PC-3 (cell line): ENCODE measurements at regions of chr2 and their contacts with region 1.

Region 1: DNA sequence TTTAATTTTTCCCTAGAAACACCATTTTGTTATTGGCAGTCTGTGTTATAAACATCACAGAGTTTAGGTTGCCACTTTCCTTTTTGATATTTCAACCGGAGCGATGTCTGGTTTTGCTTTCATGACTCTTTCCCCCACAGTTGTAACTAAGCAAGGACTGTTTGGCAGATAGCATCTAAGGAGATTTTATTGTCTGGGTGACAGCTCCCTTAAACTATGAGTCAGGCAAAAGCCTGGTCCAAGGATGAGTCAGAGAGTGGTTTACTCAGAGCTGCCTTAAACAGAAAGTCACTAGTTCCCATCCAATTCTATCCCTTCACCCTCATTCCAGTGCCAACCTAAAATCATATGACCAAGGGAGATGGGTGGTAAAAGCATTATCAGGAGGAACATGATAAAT is 341.6 kb upstream of the VWC2L start:
- DNase-seq: peak; percentile 97
- ATAC-seq: peak; percentile 93
- H3K4me3 ChIP-seq: peak overlapping the region; percentile 53
- H3K27ac ChIP-seq: peak overlapping the region; percentile 88
- H3K4me1 ChIP-seq: peaks cover 49% of the 10 kb centered on the region
- H3K27me3 ChIP-seq: no peaks in the 10 kb centered on the region
- CTCF ChIP-seq: no peak

Region 2: DNA sequence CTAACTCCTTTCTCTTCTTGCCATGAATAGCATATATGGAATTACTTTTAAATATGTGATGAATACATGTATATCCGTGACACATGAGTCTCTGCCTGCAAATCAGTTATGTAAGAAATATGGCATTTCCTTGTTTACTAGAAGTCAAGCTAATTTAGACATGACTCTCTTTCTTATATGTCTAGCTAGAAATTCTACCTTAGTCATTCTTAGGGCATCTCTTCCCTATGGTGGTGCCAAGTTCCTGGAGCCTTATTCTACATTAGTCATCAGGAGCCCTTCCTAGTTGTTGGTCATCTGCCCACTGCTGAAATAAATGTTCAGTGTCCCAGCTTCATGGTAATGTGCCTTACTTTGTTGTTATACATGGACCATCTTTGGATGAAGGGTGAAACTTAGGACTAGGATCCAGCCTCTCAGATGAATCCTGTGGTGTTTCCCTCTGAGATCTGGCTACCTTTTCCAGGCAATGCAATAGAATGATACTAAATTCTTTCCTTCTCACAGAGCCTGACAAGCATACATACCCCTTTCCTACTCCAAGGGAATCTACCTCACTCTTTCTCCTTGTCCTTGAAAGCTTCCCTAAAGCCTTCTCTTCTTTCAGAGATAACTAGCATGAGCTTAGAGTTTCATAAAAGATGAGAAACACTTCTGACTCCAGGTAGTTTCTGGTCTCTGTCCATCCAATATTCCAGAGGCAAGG is 73.7 kb before region 1 on chr2:
- CTCF ChIA-PET with region 1: no interaction called
- POLR2A ChIA-PET with region 1: no interaction called
- intact Hi-C with region 1: loop called (anchors 1 kb)
- DNase-seq: peak; percentile 95
- ATAC-seq: peak; percentile 98
- H3K4me3 ChIP-seq: no peak overlapping the region
- H3K27ac ChIP-seq: peak overlapping the region; percentile 61
- H3K4me1 ChIP-seq: peaks cover 17% of the 10 kb centered on the region
- H3K27me3 ChIP-seq: no peaks in the 10 kb centered on the region
- CTCF ChIP-seq: no peak

Region 3: GRCh38 chr2:214019229-214019972 is 49.9 kb before region 1 on chr2:
- CTCF ChIA-PET with region 1: no interaction called
- POLR2A ChIA-PET with region 1: no interaction called
- intact Hi-C with region 1: loop called (anchors 2 kb)
- DNase-seq: peak; percentile 95
- ATAC-seq: peak; percentile 97
- H3K4me3 ChIP-seq: no peak overlapping the region
- H3K27ac ChIP-seq: peak overlapping the region; percentile 72
- H3K4me1 ChIP-seq: peaks cover 23% of the 10 kb centered on the region
- H3K27me3 ChIP-seq: no peaks in the 10 kb centered on the region
- CTCF ChIP-seq: no peak

Region 4: DNA sequence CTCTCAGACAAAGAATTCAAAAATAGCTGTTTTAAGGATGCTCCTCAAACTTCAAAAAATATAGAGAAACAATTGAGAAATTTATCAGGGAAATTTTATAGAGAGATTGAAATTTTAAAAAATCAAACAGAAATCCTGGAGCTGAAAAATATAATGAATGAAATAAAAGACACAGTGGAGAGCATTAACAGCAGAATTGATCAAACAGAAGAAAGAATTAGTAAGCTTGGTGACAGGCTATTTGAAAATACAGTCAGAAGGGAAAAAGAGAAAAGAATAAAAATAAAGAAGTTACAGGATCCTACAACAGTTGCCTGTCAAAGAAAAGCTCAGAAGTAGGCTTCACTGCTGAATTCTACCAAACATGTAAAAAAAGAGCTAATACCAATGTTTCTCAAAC is 47.8 kb after region 1 on chr2:
- CTCF ChIA-PET with region 1: no interaction called
- POLR2A ChIA-PET with region 1: no interaction called
- intact Hi-C with region 1: no loop called
- DNase-seq: no peak
- ATAC-seq: no peak
- H3K4me3 ChIP-seq: no peak overlapping the region
- H3K27ac ChIP-seq: no peak overlapping the region
- H3K4me1 ChIP-seq: no peaks in the 10 kb centered on the region
- H3K27me3 ChIP-seq: no peaks in the 10 kb centered on the region
- CTCF ChIP-seq: no peak

Region 5: DNA sequence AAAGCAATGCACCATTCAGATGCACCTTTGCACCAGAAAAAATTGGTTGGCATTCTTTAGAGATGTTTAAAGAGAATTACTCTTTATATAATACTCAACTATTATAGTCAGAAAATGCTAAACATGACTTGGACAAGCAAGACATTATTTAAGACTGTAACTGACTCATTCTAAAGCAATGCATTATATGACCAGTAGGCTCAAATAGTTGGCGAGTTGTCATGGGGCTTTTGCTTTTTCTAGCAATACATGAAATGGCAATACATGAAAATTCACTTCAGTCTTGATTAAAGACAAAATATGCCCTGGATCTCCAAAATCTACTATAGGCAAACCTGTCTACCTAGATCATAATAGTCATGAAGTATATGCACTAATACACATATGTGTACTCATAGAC is 124.7 kb after region 1 on chr2:
- CTCF ChIA-PET with region 1: no interaction called
- POLR2A ChIA-PET with region 1: interaction called, 5 read pairs
- intact Hi-C with region 1: loop called (anchors 5 kb)
- DNase-seq: peak; percentile 86
- ATAC-seq: peak; percentile 91
- H3K4me3 ChIP-seq: no peak overlapping the region
- H3K27ac ChIP-seq: no peak overlapping the region
- H3K4me1 ChIP-seq: peaks cover 23% of the 10 kb centered on the region
- H3K27me3 ChIP-seq: no peaks in the 10 kb centered on the region
- CTCF ChIP-seq: no peak

Region 6: DNA sequence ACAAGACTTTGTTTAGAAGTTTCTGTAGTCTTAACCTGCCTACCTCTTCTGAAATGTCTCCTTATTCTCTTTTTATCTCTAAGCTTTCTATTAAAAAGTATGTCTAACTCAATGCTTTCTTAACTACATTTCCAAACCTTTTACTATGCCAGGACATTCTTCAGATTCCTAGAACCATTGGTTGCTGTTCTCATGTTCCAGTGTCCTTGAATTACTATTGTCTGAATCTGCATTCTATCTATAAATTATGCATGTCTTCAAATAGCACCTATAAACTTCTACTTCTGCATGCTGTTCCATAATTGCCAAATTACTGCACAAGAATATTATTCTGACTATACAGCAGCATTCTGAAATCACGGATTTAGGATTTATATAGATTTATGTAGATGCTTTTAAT is 175.6 kb after region 1 on chr2:
- CTCF ChIA-PET with region 1: no interaction called
- POLR2A ChIA-PET with region 1: no interaction called
- intact Hi-C with region 1: loop called (anchors 5 kb)
- DNase-seq: peak; percentile 24
- ATAC-seq: peak; percentile 23; the same call in 1 of the 2 replicates
- H3K4me3 ChIP-seq: no peak overlapping the region
- H3K27ac ChIP-seq: no peak overlapping the region
- H3K4me1 ChIP-seq: peaks cover 12% of the 10 kb centered on the region
- H3K27me3 ChIP-seq: no peaks in the 10 kb centered on the region
- CTCF ChIP-seq: no peak

Region 7: DNA sequence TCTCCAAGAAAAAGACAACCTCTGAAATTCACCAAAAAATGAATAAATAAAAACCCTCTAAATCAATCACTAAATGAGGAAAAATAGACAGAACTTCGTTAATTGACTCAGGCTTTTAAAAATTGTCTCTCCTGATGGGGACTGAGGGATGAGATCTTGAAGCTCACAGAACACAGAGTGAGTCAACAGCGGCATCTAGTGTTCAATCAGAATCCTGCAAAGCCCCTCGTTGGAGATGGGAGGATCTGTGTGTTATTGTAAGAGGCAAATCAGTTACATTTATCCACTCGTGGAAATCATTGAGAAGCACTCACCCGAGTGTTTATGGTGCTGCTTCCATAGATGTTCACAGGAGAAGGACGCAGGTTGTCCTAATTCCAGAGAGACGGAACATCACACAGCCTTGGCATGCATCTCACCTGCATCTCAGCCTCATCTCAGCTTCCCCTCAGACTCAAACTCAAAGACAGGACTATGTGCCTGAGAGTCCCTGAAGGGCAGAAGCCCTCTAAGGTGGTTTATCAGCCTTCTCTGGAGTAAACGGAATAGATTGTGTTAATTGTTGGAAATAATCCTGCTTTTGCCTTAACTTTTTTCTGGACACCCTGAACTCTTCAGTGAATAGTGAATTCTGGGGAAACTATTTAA is 1862.1 kb after region 1 on chr2:
- CTCF ChIA-PET with region 1: no interaction called
- POLR2A ChIA-PET with region 1: no interaction called
- intact Hi-C with region 1: loop called (anchors 10 kb)
- DNase-seq: peak; percentile 93
- ATAC-seq: peak; percentile 83
- H3K4me3 ChIP-seq: peak overlapping the region; percentile 58
- H3K27ac ChIP-seq: peak overlapping the region; percentile 65
- H3K4me1 ChIP-seq: peaks cover 49% of the 10 kb centered on the region
- H3K27me3 ChIP-seq: no peaks in the 10 kb centered on the region
- CTCF ChIP-seq: peak; percentile 99